ENCODE measurements at regions of chr1 and their contacts with region 1.

Region 1: DNA sequence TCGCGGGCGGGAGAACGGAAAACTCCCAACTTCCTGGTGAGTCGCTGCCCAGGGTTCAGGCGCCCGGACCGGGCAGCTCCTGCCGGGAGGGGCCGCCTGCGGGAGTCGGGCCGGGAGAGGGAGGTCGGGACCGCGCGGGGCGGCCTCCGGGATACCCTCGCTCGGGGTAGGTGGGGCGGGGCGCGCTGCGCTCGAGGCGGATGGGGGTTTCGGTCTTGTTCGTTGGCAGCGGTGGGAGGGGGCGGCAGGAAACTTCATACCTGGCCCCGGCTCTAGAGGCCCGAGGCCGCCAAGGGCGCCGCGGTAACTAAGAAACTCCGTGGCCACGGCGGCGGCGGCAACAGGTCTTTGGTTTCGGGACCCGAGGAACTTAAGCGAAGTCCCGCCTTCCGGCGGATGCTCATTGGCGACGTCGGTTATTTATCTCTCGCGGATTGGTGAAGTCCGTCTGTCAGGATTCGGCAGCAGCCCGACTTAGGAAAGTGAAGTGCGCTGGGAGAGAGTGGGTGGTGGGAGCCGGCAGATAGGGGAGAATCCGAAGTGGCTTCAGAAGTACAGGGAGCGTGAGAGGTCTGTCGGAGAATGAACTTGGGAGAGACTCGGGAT is 546 bp downstream of the NEK7 start:
- DNase-seq: peak; percentile 93
- H3K4me3 ChIP-seq: peak overlapping the region; percentile 70 to 91 (median 81)
- H3K27ac ChIP-seq: peak overlapping the region; percentile 93
- H3K4me1 ChIP-seq: peaks cover 22% of the 10 kb centered on the region
- H3K27me3 ChIP-seq: no peaks in the 10 kb centered on the region
- CTCF ChIP-seq: no peak

Region 2: GRCh38 chr1:197526736-197527371 is 630.5 kb before region 1 on chr1:
- CTCF ChIA-PET with region 1: no interaction called
- dilution Hi-C with region 1: no loop called
- in situ Hi-C with region 1: no loop called
- intact Hi-C with region 1: loop called (anchors 5 kb)
- DNase-seq: peak; percentile 2
- H3K4me3 ChIP-seq: no peak overlapping the region
- H3K27ac ChIP-seq: no peak overlapping the region
- H3K4me1 ChIP-seq: no peaks in the 10 kb centered on the region
- H3K27me3 ChIP-seq: no peaks in the 10 kb centered on the region
- CTCF ChIP-seq: peak; percentile 44 to 54

Region 3: DNA sequence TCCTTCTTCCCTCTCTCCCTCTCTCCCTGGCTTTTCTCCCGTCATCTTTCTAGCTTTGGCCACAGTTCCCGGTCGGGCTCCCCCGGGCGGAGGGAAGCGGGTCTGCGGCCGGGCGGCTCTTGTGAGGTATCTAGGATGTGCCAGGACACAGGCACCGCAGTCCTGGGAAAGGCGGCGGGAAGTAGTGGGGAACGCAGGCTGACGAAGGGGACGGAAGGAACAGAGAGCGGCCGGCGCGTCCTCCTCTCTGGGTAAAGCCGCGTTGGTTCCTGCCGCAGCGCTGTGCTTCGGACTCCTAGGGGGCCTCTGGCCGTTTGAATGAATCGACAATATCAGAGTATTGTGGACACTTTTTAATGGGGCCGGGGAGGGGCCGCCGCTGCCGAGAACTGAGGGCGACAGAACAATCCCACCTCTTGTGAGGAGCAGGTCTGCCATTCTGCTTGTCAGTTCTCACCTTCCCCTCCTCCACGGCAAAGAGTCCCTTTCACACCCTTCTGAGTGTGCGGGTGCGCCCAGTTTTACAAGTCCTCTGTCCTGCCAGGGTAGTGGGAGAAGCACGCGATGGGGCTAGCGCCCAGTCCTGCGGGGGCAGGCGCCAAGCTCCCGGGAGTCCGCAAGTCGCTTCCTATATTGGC is 241.4 kb before region 1 on chr1:
- CTCF ChIA-PET with region 1: no interaction called
- dilution Hi-C with region 1: no loop called
- in situ Hi-C with region 1: no loop called
- intact Hi-C with region 1: loop called (anchors 5 kb)
- DNase-seq: peak; percentile 56
- H3K4me3 ChIP-seq: peak overlapping the region; percentile 18 to 44 (median 38)
- H3K27ac ChIP-seq: no peak overlapping the region
- H3K4me1 ChIP-seq: peaks cover 36% of the 10 kb centered on the region
- H3K27me3 ChIP-seq: peaks cover 85% of the 10 kb centered on the region
- CTCF ChIP-seq: peak; percentile 25 to 65

Region 4: GRCh38 chr1:198056255-198056654 is 101.1 kb before region 1 on chr1:
- CTCF ChIA-PET with region 1: no interaction called
- dilution Hi-C with region 1: no loop called
- in situ Hi-C with region 1: no loop called
- intact Hi-C with region 1: no loop called
- DNase-seq: no peak
- H3K4me3 ChIP-seq: no peak overlapping the region
- H3K27ac ChIP-seq: no peak overlapping the region
- H3K4me1 ChIP-seq: no peaks in the 10 kb centered on the region
- H3K27me3 ChIP-seq: no peaks in the 10 kb centered on the region
- CTCF ChIP-seq: peak; percentile 28 to 33

Region 5: GRCh38 chr1:198088360-198089071 is 68.8 kb before region 1 on chr1:
- CTCF ChIA-PET with region 1: no interaction called
- dilution Hi-C with region 1: no loop called
- in situ Hi-C with region 1: no loop called
- intact Hi-C with region 1: loop called (anchors 1 kb)
- DNase-seq: peak; percentile 45
- H3K4me3 ChIP-seq: no peak overlapping the region
- H3K27ac ChIP-seq: no peak overlapping the region
- H3K4me1 ChIP-seq: no peaks in the 10 kb centered on the region
- H3K27me3 ChIP-seq: no peaks in the 10 kb centered on the region
- CTCF ChIP-seq: peak; percentile 56 to 66

Region 6: GRCh38 chr1:198102454-198102827 is 54.9 kb before region 1 on chr1:
- CTCF ChIA-PET with region 1: no interaction called
- dilution Hi-C with region 1: no loop called
- in situ Hi-C with region 1: no loop called
- intact Hi-C with region 1: no loop called
- DNase-seq: no peak
- H3K4me3 ChIP-seq: no peak overlapping the region
- H3K27ac ChIP-seq: no peak overlapping the region
- H3K4me1 ChIP-seq: peaks cover 2% of the 10 kb centered on the region
- H3K27me3 ChIP-seq: no peaks in the 10 kb centered on the region
- CTCF ChIP-seq: no peak

Region 7: DNA sequence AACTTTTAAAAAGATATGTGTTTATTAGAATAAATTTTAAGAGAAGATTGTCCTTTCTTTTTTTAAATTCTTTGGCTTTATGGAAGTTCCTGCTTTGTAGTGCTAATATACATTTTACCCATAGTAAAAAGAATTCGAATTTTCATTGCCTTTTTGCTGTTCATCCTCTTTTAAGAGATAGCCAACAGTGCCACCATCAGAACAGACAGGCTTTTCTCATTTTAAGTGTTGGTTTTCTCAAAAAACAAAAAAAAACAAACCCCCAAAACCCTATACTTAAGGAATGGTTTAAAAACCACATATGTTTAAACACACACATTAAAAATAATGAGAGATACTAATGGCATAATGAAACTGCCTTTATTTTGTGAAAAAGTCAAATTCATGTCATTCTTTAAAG is 118.3 kb after region 1 on chr1:
- CTCF ChIA-PET with region 1: no interaction called
- dilution Hi-C with region 1: no loop called
- in situ Hi-C with region 1: no loop called
- intact Hi-C with region 1: loop called (anchors 5 kb)
- DNase-seq: no peak
- H3K4me3 ChIP-seq: no peak overlapping the region
- H3K27ac ChIP-seq: no peak overlapping the region
- H3K4me1 ChIP-seq: no peaks in the 10 kb centered on the region
- H3K27me3 ChIP-seq: no peaks in the 10 kb centered on the region
- CTCF ChIP-seq: no peak

Region 8: DNA sequence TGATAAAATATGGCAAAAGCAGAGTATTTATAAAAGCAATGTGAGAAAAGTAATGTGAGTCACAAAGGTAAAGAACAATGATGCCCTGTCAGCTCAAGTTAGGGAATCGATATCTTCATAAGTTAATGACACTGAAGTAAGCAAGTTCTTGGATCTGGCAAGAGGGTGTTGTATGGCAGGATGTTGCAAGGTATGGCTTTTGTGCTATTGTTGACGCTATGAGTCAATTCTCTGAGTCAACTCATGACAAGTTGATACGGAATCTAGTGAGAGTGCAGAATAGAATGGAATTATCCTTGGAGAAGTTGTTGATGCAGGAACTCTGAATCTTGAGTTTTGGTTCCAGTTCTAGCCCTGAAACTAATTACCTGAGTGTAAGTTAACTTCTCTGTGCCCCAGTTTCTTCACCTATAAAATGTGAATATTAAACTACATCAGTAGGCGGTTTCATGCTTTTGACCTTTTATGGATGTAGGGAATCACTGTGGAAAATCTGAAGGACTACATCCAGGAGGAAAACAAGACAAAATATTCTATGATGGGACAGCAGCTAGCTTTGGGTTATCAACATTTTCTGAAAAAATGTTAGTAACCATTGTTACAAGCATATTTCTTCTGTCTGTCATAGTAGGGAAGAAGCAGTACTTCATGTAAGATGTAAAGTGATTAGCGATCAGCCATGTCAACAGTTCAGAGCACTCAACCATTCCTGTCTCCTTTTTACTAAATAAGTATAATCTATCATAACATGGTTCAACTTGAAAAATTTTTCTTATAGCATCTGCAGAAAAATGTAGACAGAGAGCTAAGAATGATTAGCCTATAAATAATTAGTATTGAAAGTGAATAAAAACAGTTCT is 286.3 kb after region 1 on chr1:
- CTCF ChIA-PET with region 1: no interaction called
- dilution Hi-C with region 1: no loop called
- in situ Hi-C with region 1: no loop called
- intact Hi-C with region 1: loop called (anchors 5 kb)
- DNase-seq: peak; percentile 99
- H3K4me3 ChIP-seq: peak overlapping the region in 1 of 3 experiments; percentile 4
- H3K27ac ChIP-seq: peak overlapping the region; percentile 99
- H3K4me1 ChIP-seq: peaks cover 27% of the 10 kb centered on the region
- H3K27me3 ChIP-seq: no peaks in the 10 kb centered on the region
- CTCF ChIP-seq: no peak